Thyroid gland (tissue), 4 donors: ENCODE measurements at regions of chr4 and their contacts with region 1.

Region 1: GRCh38 chr4:113539408-113539807 is 222.1 kb downstream of the CAMK2D start:
- DNase-seq: no peak
- H3K4me3 ChIP-seq: no peak overlapping the region
- H3K27ac ChIP-seq: no peak overlapping the region
- H3K4me1 ChIP-seq: no peaks in the 10 kb centered on the region
- H3K27me3 ChIP-seq: no peaks in the 10 kb centered on the region
- CTCF ChIP-seq: no peak
- POLR2A ChIP-seq: no peak

Region 2: GRCh38 chr4:113300471-113300928 is 238.9 kb before region 1 on chr4:
- intact Hi-C with region 1: no loop called
- DNase-seq: peak; percentile 21 to 28
- H3K4me3 ChIP-seq: no peak overlapping the region
- H3K27ac ChIP-seq: peak overlapping the region in 2 of 3 donors; percentile 45 to 78
- H3K4me1 ChIP-seq: no peaks in the 10 kb centered on the region
- H3K27me3 ChIP-seq: no peaks in the 10 kb centered on the region
- CTCF ChIP-seq: no peak
- POLR2A ChIP-seq: peak in 1 of 2 donors; percentile 29

Region 3: GRCh38 chr4:113355550-113356371 is 183.6 kb before region 1 on chr4:
- intact Hi-C with region 1: no loop called
- DNase-seq: peak in 1 of 2 donors; percentile 2
- H3K4me3 ChIP-seq: no peak overlapping the region
- H3K27ac ChIP-seq: peak overlapping the region in 1 of 3 donors; percentile 3
- H3K4me1 ChIP-seq: peaks cover 0 to 5% of the 10 kb centered on the region in 2 donors
- H3K27me3 ChIP-seq: no peaks in the 10 kb centered on the region
- CTCF ChIP-seq: no peak
- POLR2A ChIP-seq: no peak

Region 4: GRCh38 chr4:113404841-113405240 is 134.6 kb before region 1 on chr4:
- intact Hi-C with region 1: loop called (anchors 10 kb)
- DNase-seq: no peak
- H3K4me3 ChIP-seq: no peak overlapping the region
- H3K27ac ChIP-seq: no peak overlapping the region
- H3K4me1 ChIP-seq: no peaks in the 10 kb centered on the region
- H3K27me3 ChIP-seq: no peaks in the 10 kb centered on the region
- CTCF ChIP-seq: no peak
- POLR2A ChIP-seq: no peak